ENCODE measurements at regions of chr11 and their contacts with region 1.

Region 1: GRCh38 chr11:22169833-22170232 is 23.1 kb upstream of the ANO5 start:
- DNase-seq: no peak
- ATAC-seq: no peak

Region 2: GRCh38 chr11:22157531-22158200 is 12.2 kb before region 1 on chr11:
- intact Hi-C with region 1: no loop called
- DNase-seq: no peak
- ATAC-seq: no peak

Region 3: DNA sequence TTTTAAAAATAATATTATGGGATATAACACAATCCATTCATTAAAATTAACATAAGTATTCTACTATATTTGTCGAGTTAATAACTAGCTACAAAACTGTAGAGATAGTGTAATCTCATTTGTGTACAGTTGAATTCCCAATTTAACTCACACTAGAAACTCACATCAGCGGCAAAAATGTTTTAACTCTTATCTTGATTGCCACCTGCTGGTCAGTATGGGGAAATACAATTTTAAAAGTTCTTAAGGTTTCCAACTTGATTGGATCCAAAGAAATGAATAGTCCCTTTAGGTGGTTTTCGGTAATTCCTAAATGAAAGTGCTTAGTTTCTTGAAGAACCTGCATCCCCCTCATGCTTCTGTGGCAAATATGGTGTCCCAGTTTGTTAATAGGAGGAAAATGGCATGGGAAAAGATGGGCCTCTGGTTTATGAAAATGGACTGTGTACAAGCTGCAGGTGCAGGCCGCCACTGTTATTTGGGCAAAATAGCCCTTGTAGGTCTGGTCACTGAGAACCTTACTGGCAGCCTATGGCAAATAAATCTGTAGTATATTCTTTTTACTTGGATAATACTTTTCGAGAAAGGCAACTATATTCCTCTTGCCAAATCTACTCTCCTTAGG is 134.6 kb after region 1 on chr11:
- intact Hi-C with region 1: loop called (anchors 1 kb)
- DNase-seq: no peak
- ATAC-seq: no peak

Measured in Right ventricle myocardium inferior (tissue), 1 donor.